ENCODE measurements at regions of chr14 and their contacts with region 1.

Region 1: GRCh38 chr14:24215495-24216344 is at the start of gene MDP1:
- DNase-seq: peak; percentile 92
- H3K4me3 Mint-ChIP-seq: peak within 1 kb of the TSS; percentile 84
- H3K27ac Mint-ChIP-seq: peak within 1 kb of the TSS; percentile 94
- H3K4me1 Mint-ChIP-seq: peaks cover 41% of the 10 kb centered on the region
- H3K27me3 Mint-ChIP-seq: no peaks in the 10 kb centered on the region
- total RNA-seq, gene MDP1: 14.2 to 15.8 TPM

Region 2: DNA sequence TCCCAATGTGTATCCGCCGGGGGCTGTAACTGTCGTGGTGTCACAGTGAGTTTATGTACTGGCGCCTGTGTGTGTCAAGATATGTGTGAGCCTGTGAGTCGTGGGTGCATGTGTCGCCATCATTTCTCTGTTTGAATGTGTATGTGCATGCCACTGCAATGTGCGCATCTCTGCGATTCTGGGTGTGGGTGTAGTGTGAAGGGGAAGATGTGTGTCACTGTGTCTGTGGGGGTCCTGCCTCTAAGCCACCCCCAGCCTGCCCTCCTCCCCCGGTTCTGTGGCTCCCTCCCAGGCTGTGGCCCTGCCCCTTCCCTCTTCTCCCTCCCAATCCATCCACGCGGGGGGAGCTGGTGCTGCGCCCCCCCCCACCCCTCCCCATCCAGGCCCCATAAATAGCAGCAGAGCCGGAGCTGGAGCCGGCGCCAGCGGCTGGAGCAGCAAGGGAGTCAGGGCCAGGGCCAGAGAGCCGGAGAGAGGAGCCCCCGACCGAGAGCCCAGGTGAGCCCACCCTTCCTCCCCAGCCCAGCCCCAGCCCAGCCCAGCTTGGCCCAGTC is 144.5 kb before region 1 on chr14 and contains the start of gene CPNE6:
- CTCF ChIA-PET with region 1: no interaction called
- POLR2A ChIA-PET with region 1: no interaction called
- intact Hi-C with region 1: no loop called
- DNase-seq: peak; percentile 74
- H3K4me3 Mint-ChIP-seq: no peak within 1 kb of the TSS
- H3K27ac Mint-ChIP-seq: no peak within 1 kb of the TSS
- H3K4me1 Mint-ChIP-seq: peaks cover 11% of the 10 kb centered on the region
- H3K27me3 Mint-ChIP-seq: peaks cover 3% of the 10 kb centered on the region
- total RNA-seq, gene CPNE6: not detected

Region 3: GRCh38 chr14:24141097-24141880 is 74.4 kb before region 1 on chr14 and contains the start of gene EMC9:
- CTCF ChIA-PET with region 1: interaction called, 6 read pairs
- POLR2A ChIA-PET with region 1: interaction called, 6 read pairs
- intact Hi-C with region 1: loop called (anchors 1 kb)
- DNase-seq: peak; percentile 100
- H3K4me3 Mint-ChIP-seq: peak within 1 kb of the TSS; percentile 97
- H3K27ac Mint-ChIP-seq: peak within 1 kb of the TSS; percentile 94
- H3K4me1 Mint-ChIP-seq: peaks cover 65% of the 10 kb centered on the region
- H3K27me3 Mint-ChIP-seq: no peaks in the 10 kb centered on the region
- total RNA-seq, gene EMC9: 40.0 to 40.9 TPM

Region 4: GRCh38 chr14:24188251-24189058 is 27.3 kb before region 1 on chr14 and contains the start of gene IPO4:
- CTCF ChIA-PET with region 1: interaction called, 3 read pairs
- POLR2A ChIA-PET with region 1: interaction called, 6 read pairs
- intact Hi-C with region 1: loop called (anchors 1 kb)
- DNase-seq: peak; percentile 97
- H3K4me3 Mint-ChIP-seq: peak within 1 kb of the TSS; percentile 89
- H3K27ac Mint-ChIP-seq: peak within 1 kb of the TSS; percentile 74
- H3K4me1 Mint-ChIP-seq: peaks cover 40% of the 10 kb centered on the region
- H3K27me3 Mint-ChIP-seq: no peaks in the 10 kb centered on the region
- total RNA-seq, gene IPO4: 69.5 to 72.6 TPM

Region 5: GRCh38 chr14:24232121-24232644 is 16.5 kb after region 1 on chr14 and contains the start of gene NEDD8:
- CTCF ChIA-PET with region 1: interaction called, 7 read pairs
- POLR2A ChIA-PET with region 1: interaction called, 5 read pairs
- intact Hi-C with region 1: loop called (anchors 1 kb)
- DNase-seq: peak; percentile 96
- H3K4me3 Mint-ChIP-seq: peak within 1 kb of the TSS; percentile 93
- H3K27ac Mint-ChIP-seq: peak within 1 kb of the TSS; percentile 90
- H3K4me1 Mint-ChIP-seq: peaks cover 55% of the 10 kb centered on the region
- H3K27me3 Mint-ChIP-seq: no peaks in the 10 kb centered on the region
- total RNA-seq, gene NEDD8: 202 to 213 TPM

Region 6: DNA sequence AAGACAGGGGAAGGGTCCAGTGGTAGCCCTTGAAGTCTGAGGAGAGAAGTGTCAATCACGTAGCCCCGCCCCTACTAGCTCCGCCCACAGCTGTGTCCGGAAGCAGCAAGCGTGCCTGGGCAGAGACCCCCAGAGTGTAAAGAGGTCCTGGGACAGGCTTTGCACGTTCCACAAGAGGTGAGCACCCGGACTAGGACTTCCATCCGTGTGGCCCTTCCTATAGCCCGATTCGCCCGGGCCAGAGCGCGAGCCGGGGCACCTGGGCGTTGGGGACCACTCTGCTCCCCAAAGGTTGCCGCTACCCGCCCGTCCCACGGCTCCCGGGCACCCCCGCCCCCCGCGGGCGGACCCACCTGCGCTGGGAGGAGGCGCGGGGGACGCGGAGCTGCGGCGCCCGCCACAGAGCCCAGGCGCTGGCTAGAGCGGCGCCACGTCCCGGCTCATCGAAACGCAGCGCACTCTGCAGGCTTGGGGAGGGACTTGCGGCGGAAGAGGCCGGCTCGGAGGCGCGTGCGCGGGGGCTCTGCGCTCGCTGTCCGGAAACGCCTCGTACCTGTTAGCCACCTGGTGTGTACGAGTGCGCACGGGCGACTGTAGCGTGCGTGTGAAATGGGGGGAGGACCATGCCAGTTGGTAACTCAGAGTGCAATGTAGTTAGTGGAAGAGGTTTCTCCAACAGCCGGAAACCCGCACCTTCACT is 55.6 kb after region 1 on chr14 and contains the start of gene RABGGTA:
- CTCF ChIA-PET with region 1: interaction called, 8 read pairs
- POLR2A ChIA-PET with region 1: interaction called, 8 read pairs
- intact Hi-C with region 1: loop called (anchors 1 kb)
- DNase-seq: peak; percentile 93
- H3K4me3 Mint-ChIP-seq: peak within 1 kb of the TSS; percentile 84
- H3K27ac Mint-ChIP-seq: peak within 1 kb of the TSS; percentile 94
- H3K4me1 Mint-ChIP-seq: peaks cover 42% of the 10 kb centered on the region
- H3K27me3 Mint-ChIP-seq: no peaks in the 10 kb centered on the region
- total RNA-seq, gene RABGGTA: 39.5 to 40.6 TPM

Region 7: DNA sequence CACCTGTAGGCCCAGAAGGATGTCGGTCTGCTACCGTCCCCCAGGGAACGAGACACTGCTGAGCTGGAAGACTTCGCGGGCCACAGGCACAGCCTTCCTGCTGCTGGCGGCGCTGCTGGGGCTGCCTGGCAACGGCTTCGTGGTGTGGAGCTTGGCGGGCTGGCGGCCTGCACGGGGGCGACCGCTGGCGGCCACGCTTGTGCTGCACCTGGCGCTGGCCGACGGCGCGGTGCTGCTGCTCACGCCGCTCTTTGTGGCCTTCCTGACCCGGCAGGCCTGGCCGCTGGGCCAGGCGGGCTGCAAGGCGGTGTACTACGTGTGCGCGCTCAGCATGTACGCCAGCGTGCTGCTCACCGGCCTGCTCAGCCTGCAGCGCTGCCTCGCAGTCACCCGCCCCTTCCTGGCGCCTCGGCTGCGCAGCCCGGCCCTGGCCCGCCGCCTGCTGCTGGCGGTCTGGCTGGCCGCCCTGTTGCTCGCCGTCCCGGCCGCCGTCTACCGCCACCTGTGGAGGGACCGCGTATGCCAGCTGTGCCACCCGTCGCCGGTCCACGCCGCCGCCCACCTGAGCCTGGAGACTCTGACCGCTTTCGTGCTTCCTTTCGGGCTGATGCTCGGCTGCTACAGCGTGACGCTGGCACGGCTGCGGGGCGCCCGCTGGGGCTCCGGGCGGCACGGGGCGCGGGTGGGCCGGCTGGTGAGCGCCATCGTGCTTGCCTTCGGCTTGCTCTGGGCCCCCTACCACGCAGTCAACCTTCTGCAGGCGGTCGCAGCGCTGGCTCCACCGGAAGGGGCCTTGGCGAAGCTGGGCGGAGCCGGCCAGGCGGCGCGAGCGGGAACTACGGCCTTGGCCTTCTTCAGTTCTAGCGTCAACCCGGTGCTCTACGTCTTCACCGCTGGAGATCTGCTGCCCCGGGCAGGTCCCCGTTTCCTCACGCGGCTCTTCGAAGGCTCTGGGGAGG is 95.2 kb after region 1 on chr14 and contains the start of gene LTB4R:
- CTCF ChIA-PET with region 1: interaction called, 21 read pairs
- POLR2A ChIA-PET with region 1: interaction called, 3 read pairs
- intact Hi-C with region 1: no loop called
- DNase-seq: peak; percentile 81
- H3K4me3 Mint-ChIP-seq: peak within 1 kb of the TSS; percentile 79
- H3K27ac Mint-ChIP-seq: peak within 1 kb of the TSS; percentile 84
- H3K4me1 Mint-ChIP-seq: peaks cover 69% of the 10 kb centered on the region
- H3K27me3 Mint-ChIP-seq: no peaks in the 10 kb centered on the region
- total RNA-seq, gene LTB4R: 15.4 to 16.7 TPM

Region 8: DNA sequence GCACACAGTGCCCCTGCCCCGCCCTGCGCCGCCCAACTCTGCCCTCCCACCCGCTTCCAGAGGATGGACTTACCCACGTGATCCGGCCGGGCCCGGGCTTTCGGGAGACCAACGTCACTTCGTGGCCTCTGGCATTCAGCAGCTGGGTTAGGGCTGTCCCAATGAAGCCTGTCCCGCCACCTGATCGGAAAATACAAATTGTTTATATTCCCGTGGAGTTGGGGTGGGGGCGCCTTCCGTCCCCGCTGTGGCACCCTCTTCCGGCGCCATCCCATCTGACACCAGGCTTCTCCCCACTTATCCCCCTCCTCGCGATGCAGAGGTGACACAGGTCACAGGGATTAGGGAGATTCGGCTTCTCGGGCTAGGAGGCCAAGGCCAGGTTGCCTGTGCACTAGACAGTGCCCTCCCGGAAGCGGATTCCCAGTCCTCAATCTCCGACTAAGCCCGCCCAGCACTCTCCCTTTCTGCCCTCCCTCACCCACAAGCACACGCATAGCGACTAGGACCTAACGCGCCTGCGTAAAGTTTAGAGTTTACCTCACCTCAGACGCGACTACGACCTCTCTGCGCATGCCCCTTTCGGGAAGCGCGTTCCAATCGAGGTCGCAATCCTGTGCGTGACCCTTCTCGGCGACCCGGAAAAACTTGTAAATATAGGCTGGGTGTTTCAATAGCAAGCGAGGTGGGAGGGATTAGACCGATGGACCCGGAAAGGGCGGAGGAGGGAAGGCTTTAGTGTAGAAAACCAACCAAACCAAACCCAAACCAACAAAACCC is 226.7 kb after region 1 on chr14 and contains the start of gene SDR39U1:
- CTCF ChIA-PET with region 1: interaction called, 3 read pairs
- POLR2A ChIA-PET with region 1: no interaction called
- intact Hi-C with region 1: loop called (anchors 1 kb)
- DNase-seq: peak; percentile 98
- H3K4me3 Mint-ChIP-seq: peak within 1 kb of the TSS; percentile 95
- H3K27ac Mint-ChIP-seq: peak within 1 kb of the TSS; percentile 99
- H3K4me1 Mint-ChIP-seq: peaks cover 43% of the 10 kb centered on the region
- H3K27me3 Mint-ChIP-seq: no peaks in the 10 kb centered on the region
- total RNA-seq, gene SDR39U1: 36.2 to 43.8 TPM

Measured in activated CD4-positive, alpha-beta memory T cell treated with anti-CD3 and anti-CD28 coated beads for 36 hours (primary cell).